ENCODE measurements at regions of chr4 and their contacts with region 1.

Region 1: GRCh38 chr4:99808260-99808857 is 8.3 kb upstream of the DAPP1 start:
- DNase-seq: no peak
- ATAC-seq: peak; percentile 94
- H3K4me3 ChIP-seq: no peak overlapping the region
- H3K27ac ChIP-seq: no peak overlapping the region
- H3K4me1 ChIP-seq: peaks cover 5% of the 10 kb centered on the region; the same call in 1 of the 2 replicates
- H3K27me3 ChIP-seq: no peaks in the 10 kb centered on the region; a peak in 1 of 4 replicates
- CTCF ChIP-seq: peak; percentile 75 to 85 (median 79)
- EP300 ChIP-seq: no peak
- POLR2A ChIP-seq: no peak
- RAD21 ChIP-seq: peak; percentile 93

Region 2: DNA sequence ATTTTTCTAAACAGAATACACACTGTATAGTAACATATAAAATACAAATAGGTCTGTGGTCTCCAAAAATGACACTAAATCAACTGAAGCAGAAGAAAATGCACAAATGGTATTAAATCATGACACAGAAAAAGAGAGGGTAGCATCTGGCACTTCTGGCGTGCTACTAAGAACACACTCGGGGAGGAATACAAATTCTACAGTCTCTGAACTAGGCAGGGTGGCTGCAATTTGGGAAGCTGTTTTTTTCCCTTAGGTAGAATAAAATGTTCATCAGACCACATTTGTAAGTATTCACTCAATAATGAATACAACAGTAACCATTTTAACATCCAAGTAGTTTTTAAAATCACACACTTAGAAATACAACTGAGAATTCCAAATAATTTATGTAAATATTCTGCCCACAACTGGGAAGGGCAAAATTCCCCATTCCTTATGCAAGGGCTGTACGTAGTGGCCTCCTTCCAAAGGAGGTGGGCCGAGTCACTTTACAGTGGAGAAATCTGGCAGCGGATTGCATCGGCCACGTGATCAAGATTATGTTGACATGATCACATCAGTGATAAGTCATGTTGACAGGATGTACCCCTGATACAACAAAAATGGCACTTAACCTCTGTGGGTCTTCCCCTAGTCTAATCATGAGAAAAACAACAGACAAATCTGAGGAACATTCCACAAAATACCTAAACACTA is 1251.0 kb before region 1 on chr4:
- CTCF ChIA-PET with region 1: no interaction called
- POLR2A ChIA-PET with region 1: no interaction called
- RAD21 ChIA-PET with region 1: no interaction called
- SMC1A ChIA-PET with region 1: no interaction called
- in situ Hi-C with region 1: no loop called
- intact Hi-C with region 1: no loop called
- DNase-seq: no peak
- ATAC-seq: no peak
- H3K4me3 ChIP-seq: no peak overlapping the region
- H3K27ac ChIP-seq: no peak overlapping the region
- H3K4me1 ChIP-seq: no peaks in the 10 kb centered on the region
- H3K27me3 ChIP-seq: no peaks in the 10 kb centered on the region
- CTCF ChIP-seq: no peak
- EP300 ChIP-seq: no peak
- POLR2A ChIP-seq: no peak
- RAD21 ChIP-seq: no peak

Region 3: GRCh38 chr4:99462875-99463464 is 345.4 kb before region 1 on chr4:
- CTCF ChIA-PET with region 1: interaction called, 7 read pairs
- POLR2A ChIA-PET with region 1: no interaction called
- RAD21 ChIA-PET with region 1: interaction called, 11 read pairs
- SMC1A ChIA-PET with region 1: interaction called, 6 read pairs
- in situ Hi-C with region 1: no loop called
- intact Hi-C with region 1: no loop called
- DNase-seq: peak; percentile 24
- ATAC-seq: peak; percentile 99
- H3K4me3 ChIP-seq: no peak overlapping the region
- H3K27ac ChIP-seq: no peak overlapping the region
- H3K4me1 ChIP-seq: no peaks in the 10 kb centered on the region
- H3K27me3 ChIP-seq: no peaks in the 10 kb centered on the region
- CTCF ChIP-seq: peak; percentile 67 to 89 (median 75); a peak in 5 of 6 replicates
- EP300 ChIP-seq: no peak
- POLR2A ChIP-seq: no peak
- RAD21 ChIP-seq: peak; percentile 96

Region 4: DNA sequence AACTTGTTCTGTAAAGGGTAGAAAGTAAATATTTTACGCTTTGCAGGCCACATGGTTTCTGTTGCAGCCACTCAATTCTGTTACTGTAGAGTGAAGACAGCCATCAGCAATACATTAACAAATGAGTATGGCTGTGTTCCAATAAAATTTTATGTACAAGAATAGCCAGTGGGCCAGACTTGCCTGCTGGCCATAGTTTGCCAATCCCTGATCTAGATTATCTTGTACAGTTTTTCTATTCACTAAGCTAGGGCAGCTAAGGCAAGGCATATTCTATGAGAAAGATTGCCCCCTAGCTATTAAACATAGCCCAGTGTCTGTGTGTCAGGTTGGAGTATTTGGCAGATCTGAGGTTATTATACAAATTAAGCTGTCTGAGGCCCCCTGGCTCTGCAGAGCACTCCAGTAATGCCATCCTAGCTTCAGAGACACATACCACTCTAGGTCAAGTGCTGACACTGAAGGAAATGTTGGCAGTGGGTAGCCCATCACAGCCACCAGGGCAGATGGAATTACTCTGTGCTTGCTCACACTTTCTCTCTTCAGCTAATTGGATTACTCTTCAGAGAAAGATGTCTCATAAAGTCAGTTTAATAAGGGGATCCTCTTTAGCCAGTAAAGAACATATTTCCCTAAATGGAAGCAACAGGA is 193.1 kb before region 1 on chr4:
- CTCF ChIA-PET with region 1: interaction called, 14 read pairs
- POLR2A ChIA-PET with region 1: no interaction called
- RAD21 ChIA-PET with region 1: interaction called, 16 read pairs
- SMC1A ChIA-PET with region 1: interaction called, 10 read pairs
- in situ Hi-C with region 1: no loop called
- intact Hi-C with region 1: no loop called
- DNase-seq: no peak
- ATAC-seq: peak; percentile 57
- H3K4me3 ChIP-seq: no peak overlapping the region
- H3K27ac ChIP-seq: no peak overlapping the region
- H3K4me1 ChIP-seq: no peaks in the 10 kb centered on the region
- H3K27me3 ChIP-seq: no peaks in the 10 kb centered on the region
- CTCF ChIP-seq: peak in 2 of 3 experiments; percentile 4 to 26; a peak in 1 of 6 replicates
- EP300 ChIP-seq: no peak
- POLR2A ChIP-seq: no peak
- RAD21 ChIP-seq: no peak

Region 5: GRCh38 chr4:99708551-99708950 is 99.8 kb before region 1 on chr4:
- CTCF ChIA-PET with region 1: no interaction called
- POLR2A ChIA-PET with region 1: no interaction called
- RAD21 ChIA-PET with region 1: no interaction called
- SMC1A ChIA-PET with region 1: no interaction called
- in situ Hi-C with region 1: no loop called
- intact Hi-C with region 1: no loop called
- DNase-seq: no peak
- ATAC-seq: no peak
- H3K4me3 ChIP-seq: no peak overlapping the region
- H3K27ac ChIP-seq: no peak overlapping the region
- H3K4me1 ChIP-seq: no peaks in the 10 kb centered on the region
- H3K27me3 ChIP-seq: no peaks in the 10 kb centered on the region
- CTCF ChIP-seq: no peak
- EP300 ChIP-seq: no peak
- POLR2A ChIP-seq: no peak
- RAD21 ChIP-seq: no peak

Region 6: DNA sequence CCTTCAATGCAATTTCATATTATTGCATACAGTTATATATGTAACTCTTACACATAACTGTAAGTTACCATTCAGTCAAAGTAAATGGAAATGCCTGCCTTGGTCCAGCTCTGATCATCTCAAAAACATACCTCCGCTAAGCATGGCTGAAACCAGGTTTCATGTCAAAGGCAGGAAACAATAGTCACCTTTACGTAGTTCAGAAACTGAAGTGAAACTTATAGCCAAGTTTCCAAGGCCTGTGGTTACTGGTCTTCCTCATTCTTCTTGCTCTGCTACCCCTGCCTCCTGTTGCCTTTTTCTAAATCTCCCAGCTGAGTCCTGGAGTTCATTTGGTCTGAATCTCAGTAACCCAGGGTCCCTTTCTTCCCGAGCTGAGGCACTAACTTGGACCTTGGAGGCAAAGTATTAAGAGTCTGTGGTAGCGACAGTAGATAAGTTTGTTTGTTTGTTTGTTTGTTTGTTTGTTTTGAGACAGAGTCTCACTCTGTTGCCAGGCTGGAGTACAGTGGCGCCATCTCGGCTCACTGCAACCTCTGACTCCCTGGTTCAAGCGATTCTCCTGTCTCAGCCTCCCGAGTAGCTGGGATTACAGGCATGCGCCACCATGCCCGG is 39.1 kb after region 1 on chr4:
- CTCF ChIA-PET with region 1: interaction called, 22 read pairs
- POLR2A ChIA-PET with region 1: interaction called, 4 read pairs
- RAD21 ChIA-PET with region 1: interaction called, 15 read pairs
- SMC1A ChIA-PET with region 1: interaction called, 23 read pairs
- in situ Hi-C with region 1: no loop called
- intact Hi-C with region 1: no loop called
- DNase-seq: peak; percentile 87
- ATAC-seq: peak; percentile 61
- H3K4me3 ChIP-seq: peak overlapping the region; percentile 48; the same call in 1 of the 2 replicates
- H3K27ac ChIP-seq: peak overlapping the region; percentile 94
- H3K4me1 ChIP-seq: peaks cover 63% of the 10 kb centered on the region
- H3K27me3 ChIP-seq: no peaks in the 10 kb centered on the region
- CTCF ChIP-seq: no peak
- EP300 ChIP-seq: peak; percentile 94 to 99
- POLR2A ChIP-seq: no peak
- RAD21 ChIP-seq: no peak

Region 7: GRCh38 chr4:99875072-99875471 is 66.7 kb after region 1 on chr4:
- CTCF ChIA-PET with region 1: interaction called, 13 read pairs
- POLR2A ChIA-PET with region 1: no interaction called
- RAD21 ChIA-PET with region 1: interaction called, 5 read pairs
- SMC1A ChIA-PET with region 1: interaction called, 11 read pairs
- in situ Hi-C with region 1: loop called (anchors 5 kb)
- intact Hi-C with region 1: no loop called
- DNase-seq: no peak
- ATAC-seq: no peak
- H3K4me3 ChIP-seq: no peak overlapping the region
- H3K27ac ChIP-seq: no peak overlapping the region
- H3K4me1 ChIP-seq: no peaks in the 10 kb centered on the region
- H3K27me3 ChIP-seq: no peaks in the 10 kb centered on the region
- CTCF ChIP-seq: no peak
- EP300 ChIP-seq: no peak
- POLR2A ChIP-seq: no peak
- RAD21 ChIP-seq: no peak

Region 8: GRCh38 chr4:99943904-99944437 is 135.6 kb after region 1 on chr4:
- CTCF ChIA-PET with region 1: interaction called, 106 read pairs
- POLR2A ChIA-PET with region 1: interaction called, 8 read pairs
- RAD21 ChIA-PET with region 1: interaction called, 95 read pairs
- SMC1A ChIA-PET with region 1: interaction called, 42 read pairs
- in situ Hi-C with region 1: no loop called
- intact Hi-C with region 1: no loop called
- DNase-seq: no peak
- ATAC-seq: peak; percentile 40
- H3K4me3 ChIP-seq: peak overlapping the region; percentile 90
- H3K27ac ChIP-seq: peak overlapping the region; percentile 20; the same call in 1 of the 2 replicates
- H3K4me1 ChIP-seq: peaks cover 12% of the 10 kb centered on the region; the same call in 1 of the 2 replicates
- H3K27me3 ChIP-seq: no peaks in the 10 kb centered on the region
- CTCF ChIP-seq: no peak
- EP300 ChIP-seq: no peak
- POLR2A ChIP-seq: no peak
- RAD21 ChIP-seq: no peak

Region 9: GRCh38 chr4:100177855-100178254 is 369.5 kb after region 1 on chr4:
- CTCF ChIA-PET with region 1: no interaction called
- POLR2A ChIA-PET with region 1: no interaction called
- RAD21 ChIA-PET with region 1: no interaction called
- SMC1A ChIA-PET with region 1: no interaction called
- in situ Hi-C with region 1: no loop called
- intact Hi-C with region 1: no loop called
- DNase-seq: no peak
- ATAC-seq: no peak
- H3K4me3 ChIP-seq: no peak overlapping the region
- H3K27ac ChIP-seq: no peak overlapping the region
- H3K4me1 ChIP-seq: no peaks in the 10 kb centered on the region
- H3K27me3 ChIP-seq: no peaks in the 10 kb centered on the region
- CTCF ChIP-seq: no peak
- EP300 ChIP-seq: no peak
- POLR2A ChIP-seq: no peak
- RAD21 ChIP-seq: no peak